ENCODE measurements at regions of chr5 and their contacts with region 1.

Region 1: DNA sequence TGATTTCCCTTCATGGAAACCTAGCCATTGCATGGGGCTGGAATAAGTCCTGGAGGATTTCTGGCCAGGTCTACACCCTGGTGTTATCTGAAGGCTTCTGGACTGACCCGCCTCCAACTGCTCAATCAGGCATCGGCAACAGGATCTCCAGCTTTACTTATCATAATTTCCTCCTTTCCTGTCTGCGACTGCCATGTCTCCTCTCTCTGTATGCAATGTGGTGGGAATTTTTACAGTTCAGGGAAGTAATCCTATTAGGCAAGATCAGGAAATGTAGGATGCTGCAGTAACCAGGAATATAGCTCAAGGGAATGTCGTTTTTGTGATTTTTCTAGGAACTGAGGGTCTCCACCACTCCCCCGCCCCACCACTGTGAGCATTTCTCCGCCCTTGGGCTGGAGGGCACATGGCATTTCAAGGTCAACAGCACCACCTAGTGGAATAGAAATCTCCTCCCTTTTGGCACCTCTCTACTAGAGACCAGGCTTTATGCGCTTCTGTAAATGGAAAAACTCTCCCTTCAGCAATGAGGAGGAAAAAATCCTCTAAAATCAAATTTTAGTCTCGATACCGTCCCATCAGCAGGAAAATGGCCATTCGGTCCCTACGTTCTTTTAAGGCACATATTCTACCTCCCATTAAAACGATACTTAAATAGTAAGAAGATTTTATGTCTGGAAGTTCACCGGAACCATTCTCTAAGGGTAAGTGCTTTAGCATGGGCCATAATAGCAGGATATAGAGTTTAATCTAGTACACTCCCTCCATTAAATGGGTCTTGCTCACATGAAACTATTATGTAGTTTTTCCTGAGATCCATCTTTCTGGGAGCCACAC is 93.0 kb downstream of the YTHDC2 start:
- DNase-seq: peak; percentile 11
- H3K4me3 ChIP-seq: no peak overlapping the region
- H3K27ac ChIP-seq: no peak overlapping the region
- H3K4me1 ChIP-seq: no peaks in the 10 kb centered on the region
- H3K27me3 ChIP-seq: peaks cover 8% of the 10 kb centered on the region
- CTCF ChIP-seq: peak; percentile 61 to 69 (median 67)
- EP300 ChIP-seq: no peak
- POLR2A ChIP-seq: no peak

Region 2: DNA sequence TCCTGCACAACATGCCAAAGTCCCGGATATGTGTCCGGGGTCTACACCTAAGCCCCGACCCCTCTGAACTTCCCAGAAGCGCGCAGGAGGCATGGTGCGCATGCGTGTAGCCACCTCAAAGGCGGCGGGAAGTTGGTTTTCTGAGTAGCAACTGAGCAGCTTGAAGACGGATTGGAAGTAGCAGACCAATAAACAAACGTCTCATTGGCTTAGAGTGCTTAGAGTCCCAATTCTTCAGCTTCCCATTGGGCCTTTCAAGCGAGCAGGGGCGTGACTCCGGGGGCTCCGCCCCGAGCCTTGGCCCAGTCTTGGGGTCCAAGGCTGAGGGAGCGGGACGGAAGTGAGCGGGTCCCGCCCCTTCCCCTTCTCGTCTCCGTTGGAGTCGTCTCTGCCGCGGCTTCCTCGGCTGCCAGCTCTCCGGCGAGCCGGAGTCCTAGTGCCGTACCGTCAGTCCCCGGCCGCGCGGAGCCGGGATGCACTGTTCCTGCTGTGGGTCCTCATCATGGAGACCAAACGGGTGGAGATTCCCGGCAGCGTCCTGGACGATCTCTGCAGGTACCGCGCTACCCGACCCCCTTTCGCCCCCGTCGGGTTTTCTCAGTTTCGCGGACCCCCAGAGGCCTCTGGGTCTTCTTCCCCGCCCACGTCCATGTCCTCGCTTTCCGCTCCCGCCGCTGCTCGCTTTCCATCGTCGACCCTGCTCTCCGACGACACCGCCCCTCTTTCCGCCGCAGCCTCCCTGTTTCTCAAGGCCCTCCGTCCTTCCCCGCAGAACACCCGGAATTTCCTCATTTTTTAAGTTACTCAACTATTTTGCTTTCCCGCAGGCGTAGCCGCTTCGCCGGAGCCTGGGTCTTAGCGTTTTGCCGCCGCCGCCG is 629.8 kb before region 1 on chr5 and contains the start of gene DCP2:
- in situ Hi-C with region 1: loop called in 1 of 4 experiments (anchors 25 kb)
- intact Hi-C with region 1: no loop called
- DNase-seq: peak; percentile 95
- H3K4me3 ChIP-seq: peak within 1 kb of the TSS; percentile 72 to 99 (median 86)
- H3K27ac ChIP-seq: peak within 1 kb of the TSS; percentile 91 to 96 (median 93)
- H3K4me1 ChIP-seq: peaks cover 5 to 25% (median 15%) of the 10 kb centered on the region in 4 donors
- H3K27me3 ChIP-seq: no peaks in the 10 kb centered on the region
- CTCF ChIP-seq: peak in 1 of 5 experiments; percentile 12
- EP300 ChIP-seq: no peak
- POLR2A ChIP-seq: peak; percentile 83
- total RNA-seq, gene DCP2: 11.6 to 27.8 (median 20.7) TPM

Region 3: DNA sequence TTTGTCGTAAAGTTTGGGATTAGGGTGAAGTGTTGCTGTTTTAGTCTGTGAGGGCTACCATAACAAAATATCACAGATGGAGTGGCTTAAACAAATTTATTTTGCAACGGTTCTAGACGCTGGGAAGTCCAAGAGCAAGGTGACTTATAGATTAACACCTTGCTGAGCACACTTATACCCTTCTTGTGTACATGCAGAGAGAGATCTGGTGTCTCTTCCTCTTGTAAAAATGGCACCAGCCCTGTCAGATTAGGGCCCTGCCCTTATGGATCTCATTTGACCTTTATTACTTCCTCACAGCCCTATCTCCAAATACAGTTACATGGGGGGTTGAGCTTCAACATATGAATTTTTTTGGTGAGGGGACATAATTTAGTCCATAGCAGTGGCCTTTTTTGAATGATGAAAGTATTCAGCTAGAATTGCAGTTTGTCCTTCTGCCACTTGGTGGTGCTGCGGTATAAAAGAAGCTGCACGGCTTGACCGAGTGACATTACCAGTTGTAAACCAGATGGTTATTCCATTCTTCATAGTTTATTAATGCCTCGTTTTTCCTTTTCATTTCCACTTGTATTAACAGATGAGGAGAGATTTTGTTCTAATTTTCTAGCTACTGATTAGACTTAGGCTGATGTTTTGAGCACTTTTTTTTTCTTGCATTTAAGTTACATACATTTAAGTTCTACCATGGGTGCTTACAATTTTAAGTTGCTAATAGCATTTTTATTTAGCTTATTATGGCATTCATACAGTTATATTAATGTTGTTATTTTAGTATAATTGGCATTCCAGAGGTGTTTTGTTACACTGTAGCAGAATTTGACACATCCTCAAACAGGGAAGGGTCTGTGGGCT is 610.5 kb before region 1 on chr5:
- in situ Hi-C with region 1: loop called in 1 of 4 experiments (anchors 25 kb)
- intact Hi-C with region 1: loop called (anchors 10 kb)
- DNase-seq: peak; percentile 73
- H3K4me3 ChIP-seq: no peak overlapping the region
- H3K27ac ChIP-seq: no peak overlapping the region
- H3K4me1 ChIP-seq: peaks cover 0 to 6% (median 2%) of the 10 kb centered on the region in 4 donors
- H3K27me3 ChIP-seq: no peaks in the 10 kb centered on the region
- CTCF ChIP-seq: peak; percentile 72 to 94 (median 87)
- EP300 ChIP-seq: no peak
- POLR2A ChIP-seq: no peak

Region 4: DNA sequence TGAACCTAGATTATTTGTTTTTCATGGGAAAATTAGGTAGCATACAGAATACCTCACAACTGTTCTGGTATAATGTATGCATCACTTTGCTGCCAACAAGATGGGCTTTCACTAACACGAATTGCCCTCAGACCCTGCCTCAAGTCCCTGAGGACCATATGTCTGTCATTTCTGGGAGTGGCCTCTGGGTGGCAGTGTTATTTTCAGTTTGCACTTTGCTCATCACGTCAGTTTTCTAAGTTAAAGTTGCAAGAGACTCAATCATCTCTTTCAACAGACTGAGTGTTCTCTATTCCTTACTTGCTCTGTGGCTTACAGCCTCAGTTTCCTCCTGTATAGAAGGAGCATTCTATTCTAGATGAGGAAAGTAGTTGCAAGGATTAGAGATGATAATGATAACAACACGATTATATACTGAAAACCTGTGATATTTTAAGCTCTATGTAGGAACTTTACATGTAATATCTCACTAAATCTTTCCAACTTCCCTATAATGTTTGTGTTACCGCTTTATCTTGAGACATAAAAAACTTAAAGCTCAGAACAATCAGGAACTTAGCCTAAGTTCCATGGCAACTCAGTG is 227.5 kb before region 1 on chr5:
- in situ Hi-C with region 1: loop called in 1 of 4 experiments (anchors 25 kb)
- intact Hi-C with region 1: no loop called
- DNase-seq: peak; percentile 63
- H3K4me3 ChIP-seq: no peak overlapping the region
- H3K27ac ChIP-seq: no peak overlapping the region
- H3K4me1 ChIP-seq: no peaks in the 10 kb centered on the region
- H3K27me3 ChIP-seq: no peaks in the 10 kb centered on the region
- CTCF ChIP-seq: peak; percentile 57 to 72 (median 68)
- EP300 ChIP-seq: no peak
- POLR2A ChIP-seq: no peak

Measured in transverse colon (tissue), 4 donors.